Activated CD8-positive, alpha-beta T cell treated with anti-CD3 and anti-CD28 coated beads, Interleukin-2, amount 10 ng/mL, durations not matched to agents 7 days and 5 days (primary cell): ENCODE measurements at regions of chr10 and their contacts with region 1.

Region 1: GRCh38 chr10:117216611-117217195 is 19.4 kb downstream of the KCNK18 start:
- DNase-seq: peak; percentile 71
- ATAC-seq: peak; percentile 85
- H3K4me3 Mint-ChIP-seq: peak overlapping the region; percentile 73
- H3K27ac Mint-ChIP-seq: no peak overlapping the region
- H3K4me1 Mint-ChIP-seq: peaks cover 12% of the 10 kb centered on the region
- H3K27me3 Mint-ChIP-seq: peaks cover 36% of the 10 kb centered on the region

Region 2: GRCh38 chr10:117174439-117175214 is 42.1 kb before region 1 on chr10:
- CTCF ChIA-PET with region 1: interaction called, 21 read pairs
- POLR2A ChIA-PET with region 1: no interaction called
- DNase-seq: peak; percentile 87
- ATAC-seq: peak; percentile 87
- H3K4me3 Mint-ChIP-seq: peak overlapping the region; percentile 78
- H3K27ac Mint-ChIP-seq: peak overlapping the region; percentile 58
- H3K4me1 Mint-ChIP-seq: peaks cover 18% of the 10 kb centered on the region
- H3K27me3 Mint-ChIP-seq: peaks cover 36% of the 10 kb centered on the region

Region 3: DNA sequence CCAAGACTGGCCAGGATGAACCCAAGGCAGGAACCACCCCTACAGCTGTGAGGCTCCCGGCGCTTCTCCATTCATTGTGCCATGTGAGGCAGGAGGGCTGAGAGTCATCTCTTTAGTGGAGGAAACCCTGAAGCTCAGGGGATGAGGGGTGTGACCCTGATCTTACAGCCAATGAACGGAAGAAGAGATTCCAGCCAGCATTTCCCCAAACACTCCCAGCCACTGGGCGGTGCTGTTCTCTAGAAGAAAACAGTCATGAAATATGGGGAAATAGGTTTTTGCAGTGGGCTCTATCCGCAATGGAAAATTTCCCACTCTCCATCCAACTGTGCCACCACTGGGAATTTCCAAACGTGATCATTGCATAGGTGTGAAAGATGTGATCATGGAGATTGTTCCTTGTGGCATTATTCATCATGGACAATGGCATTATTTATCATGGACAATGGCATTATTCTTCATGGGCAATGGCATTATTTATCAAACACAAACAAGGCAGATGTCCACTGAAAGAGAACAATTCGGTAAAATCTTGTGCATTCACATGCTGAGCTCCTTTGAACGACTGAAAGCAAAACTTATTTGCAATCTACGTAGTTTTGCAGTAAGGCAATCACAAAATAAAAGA is 10.2 kb after region 1 on chr10:
- CTCF ChIA-PET with region 1: interaction called, 10 read pairs
- POLR2A ChIA-PET with region 1: no interaction called
- DNase-seq: no peak
- ATAC-seq: no peak
- H3K4me3 Mint-ChIP-seq: no peak overlapping the region
- H3K27ac Mint-ChIP-seq: no peak overlapping the region
- H3K4me1 Mint-ChIP-seq: no peaks in the 10 kb centered on the region
- H3K27me3 Mint-ChIP-seq: peaks cover 18% of the 10 kb centered on the region

Region 4: GRCh38 chr10:117312430-117312829 is 95.7 kb after region 1 on chr10:
- CTCF ChIA-PET with region 1: interaction called, 13 read pairs
- POLR2A ChIA-PET with region 1: no interaction called
- DNase-seq: no peak
- ATAC-seq: no peak
- H3K4me3 Mint-ChIP-seq: no peak overlapping the region
- H3K27ac Mint-ChIP-seq: no peak overlapping the region
- H3K4me1 Mint-ChIP-seq: no peaks in the 10 kb centered on the region
- H3K27me3 Mint-ChIP-seq: no peaks in the 10 kb centered on the region

Region 5: DNA sequence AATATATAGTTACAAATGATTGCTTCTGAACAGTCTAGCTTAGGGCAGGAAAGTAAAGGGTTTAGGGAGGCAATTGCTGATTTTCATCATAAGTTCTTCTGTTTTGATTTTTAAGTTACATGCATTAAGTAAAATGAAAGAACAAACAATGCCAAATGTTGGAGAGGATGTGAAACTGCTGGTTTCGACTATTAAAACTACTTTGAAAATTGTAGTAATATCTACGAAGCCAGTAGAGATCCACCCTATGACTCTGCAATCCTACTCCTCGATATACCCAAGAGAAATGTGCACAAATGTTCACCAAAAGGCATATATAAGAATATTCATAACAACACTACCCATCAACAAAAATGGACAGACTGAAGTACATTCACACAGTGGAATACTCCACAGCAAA is 134.2 kb after region 1 on chr10:
- CTCF ChIA-PET with region 1: interaction called, 14 read pairs
- POLR2A ChIA-PET with region 1: no interaction called
- DNase-seq: no peak
- ATAC-seq: no peak
- H3K4me3 Mint-ChIP-seq: no peak overlapping the region
- H3K27ac Mint-ChIP-seq: no peak overlapping the region
- H3K4me1 Mint-ChIP-seq: peaks cover 33% of the 10 kb centered on the region
- H3K27me3 Mint-ChIP-seq: no peaks in the 10 kb centered on the region